ENCODE measurements at regions of chr2 and their contacts with region 1.

Region 1: GRCh38 chr2:64839844-64840243 is 149.4 kb upstream of the SLC1A4 start:
- DNase-seq: no peak
- H3K4me3 ChIP-seq: no peak overlapping the region
- H3K27ac ChIP-seq: peak overlapping the region; percentile 66
- H3K4me1 ChIP-seq: peaks cover 37% of the 10 kb centered on the region
- H3K27me3 ChIP-seq: no peaks in the 10 kb centered on the region
- CTCF ChIP-seq: no peak

Region 2: DNA sequence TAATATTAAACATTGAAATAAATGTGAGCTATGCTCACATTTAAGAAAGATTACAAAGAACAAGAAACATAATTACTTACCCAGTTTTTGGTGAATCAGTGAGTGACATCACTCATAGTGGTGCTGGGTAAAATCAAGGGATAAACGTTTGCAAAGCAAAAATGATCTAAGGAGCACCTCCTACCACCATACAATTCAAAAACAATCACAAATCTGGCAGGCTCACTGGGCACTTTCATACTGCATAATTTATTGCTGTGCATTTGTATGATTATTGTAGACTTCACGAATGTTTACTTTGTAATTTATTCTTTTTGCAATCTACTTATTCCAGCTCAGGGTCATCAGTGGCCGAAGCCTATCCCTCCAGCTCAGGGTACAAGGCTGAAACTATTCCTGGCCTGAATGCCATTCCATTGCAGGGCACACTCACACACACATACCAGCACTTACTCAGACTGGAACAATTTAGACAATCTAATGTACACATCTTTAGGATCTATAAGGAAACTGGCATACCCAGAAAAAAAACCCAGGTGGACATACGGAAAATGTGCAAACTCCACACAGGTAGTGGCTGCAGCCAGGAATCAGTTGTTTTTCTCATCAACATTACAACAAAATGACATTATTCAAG is 281.3 kb before region 1 on chr2:
- CTCF ChIA-PET with region 1: no interaction called
- dilution Hi-C with region 1: no loop called
- in situ Hi-C with region 1: no loop called
- intact Hi-C with region 1: no loop called
- DNase-seq: no peak
- H3K4me3 ChIP-seq: no peak overlapping the region
- H3K27ac ChIP-seq: no peak overlapping the region
- H3K4me1 ChIP-seq: no peaks in the 10 kb centered on the region
- H3K27me3 ChIP-seq: no peaks in the 10 kb centered on the region
- CTCF ChIP-seq: no peak

Region 3: GRCh38 chr2:64767670-64768468 is 72.0 kb before region 1 on chr2:
- CTCF ChIA-PET with region 1: no interaction called
- dilution Hi-C with region 1: no loop called
- in situ Hi-C with region 1: loop called in 1 of 2 experiments (anchors 5 kb)
- intact Hi-C with region 1: no loop called
- DNase-seq: peak; percentile 86
- H3K4me3 ChIP-seq: peak overlapping the region; percentile 57 to 75 (median 67)
- H3K27ac ChIP-seq: peak overlapping the region; percentile 86
- H3K4me1 ChIP-seq: peaks cover 28% of the 10 kb centered on the region
- H3K27me3 ChIP-seq: no peaks in the 10 kb centered on the region
- CTCF ChIP-seq: peak in 1 of 2 donors; percentile 0

Region 4: GRCh38 chr2:65300761-65301711 is 461.2 kb after region 1 on chr2:
- CTCF ChIA-PET with region 1: no interaction called
- dilution Hi-C with region 1: no loop called
- in situ Hi-C with region 1: no loop called
- intact Hi-C with region 1: no loop called
- DNase-seq: no peak
- H3K4me3 ChIP-seq: no peak overlapping the region
- H3K27ac ChIP-seq: no peak overlapping the region
- H3K4me1 ChIP-seq: peaks cover 24% of the 10 kb centered on the region
- H3K27me3 ChIP-seq: no peaks in the 10 kb centered on the region
- CTCF ChIP-seq: no peak